Transverse colon (tissue), 4 donors: ENCODE measurements at regions of chr7 and their contacts with region 1.

Region 1: GRCh38 chr7:119037941-119038340 is 813.4 kb downstream of the ANKRD7 start:
- DNase-seq: no peak
- H3K4me3 ChIP-seq: no peak overlapping the region
- H3K27ac ChIP-seq: no peak overlapping the region
- H3K4me1 ChIP-seq: no peaks in the 10 kb centered on the region
- H3K27me3 ChIP-seq: no peaks in the 10 kb centered on the region
- CTCF ChIP-seq: no peak
- EP300 ChIP-seq: no peak
- POLR2A ChIP-seq: no peak

Region 2: DNA sequence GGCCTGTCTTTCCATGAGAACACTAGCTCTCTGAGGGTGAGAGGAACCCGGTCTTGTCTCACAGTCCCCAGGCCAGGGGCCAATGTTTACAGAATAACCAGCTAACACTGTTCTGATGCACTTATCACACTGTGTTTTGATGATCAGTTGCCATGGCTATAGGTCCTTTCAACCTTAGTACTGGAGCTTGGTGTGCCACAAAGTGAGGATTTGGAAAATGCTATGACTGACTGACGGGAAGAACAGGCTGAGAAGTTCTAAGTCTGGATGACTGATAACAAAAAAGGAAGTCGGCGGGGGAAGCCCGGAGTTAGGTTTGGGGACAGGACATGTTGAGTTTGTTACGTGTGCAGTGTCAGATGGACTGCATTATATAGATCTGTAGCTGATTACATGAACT is 1306.5 kb before region 1 on chr7:
- in situ Hi-C with region 1: no loop called
- intact Hi-C with region 1: loop called (anchors 5 kb)
- DNase-seq: no peak
- H3K4me3 ChIP-seq: no peak overlapping the region
- H3K27ac ChIP-seq: no peak overlapping the region
- H3K4me1 ChIP-seq: no peaks in the 10 kb centered on the region
- H3K27me3 ChIP-seq: no peaks in the 10 kb centered on the region
- CTCF ChIP-seq: no peak
- EP300 ChIP-seq: no peak
- POLR2A ChIP-seq: no peak

Region 3: DNA sequence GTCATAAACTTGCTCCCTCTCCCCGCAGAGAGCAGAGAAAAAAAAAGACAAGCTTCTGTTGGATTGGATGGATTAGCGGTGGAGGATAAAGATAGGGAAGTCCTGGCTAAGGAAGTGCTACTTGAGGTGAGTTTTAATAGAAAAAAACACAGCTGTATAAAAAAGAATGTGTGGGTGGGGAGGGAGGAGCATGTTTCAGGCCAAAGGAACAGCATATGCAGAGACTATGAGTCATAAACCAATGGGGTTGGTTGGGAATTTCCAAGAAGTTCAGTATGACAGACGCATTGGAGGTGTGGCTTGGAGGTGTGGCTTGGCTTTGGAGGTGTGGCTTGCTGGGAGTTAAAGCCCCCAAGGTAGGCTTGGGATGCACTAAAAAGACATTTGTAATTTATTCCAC is 957.0 kb before region 1 on chr7:
- in situ Hi-C with region 1: no loop called
- intact Hi-C with region 1: loop called (anchors 10 kb)
- DNase-seq: no peak
- H3K4me3 ChIP-seq: no peak overlapping the region
- H3K27ac ChIP-seq: no peak overlapping the region
- H3K4me1 ChIP-seq: no peaks in the 10 kb centered on the region
- H3K27me3 ChIP-seq: no peaks in the 10 kb centered on the region
- CTCF ChIP-seq: no peak
- EP300 ChIP-seq: no peak
- POLR2A ChIP-seq: no peak

Region 4: DNA sequence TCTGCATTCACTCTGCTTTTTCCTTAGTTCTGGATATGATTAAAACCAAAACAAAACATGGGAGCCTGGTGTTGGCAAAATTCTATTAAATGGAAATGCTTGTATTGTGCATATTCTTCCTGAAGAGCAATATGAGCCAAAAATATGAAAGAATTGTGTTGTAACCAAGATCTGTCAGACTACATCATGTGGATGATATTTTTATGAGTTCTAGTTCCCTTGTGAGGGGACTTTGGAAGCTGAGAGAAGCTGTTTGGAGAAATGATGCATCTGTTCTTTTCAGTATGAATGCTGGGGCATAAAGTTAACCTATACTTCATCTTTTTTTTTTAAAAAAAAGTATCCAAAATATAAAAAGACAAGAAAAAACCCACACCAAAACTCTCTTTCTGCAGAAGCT is 30.7 kb before region 1 on chr7:
- in situ Hi-C with region 1: no loop called
- intact Hi-C with region 1: no loop called
- DNase-seq: no peak
- H3K4me3 ChIP-seq: no peak overlapping the region
- H3K27ac ChIP-seq: no peak overlapping the region
- H3K4me1 ChIP-seq: no peaks in the 10 kb centered on the region
- H3K27me3 ChIP-seq: no peaks in the 10 kb centered on the region
- CTCF ChIP-seq: no peak
- EP300 ChIP-seq: no peak
- POLR2A ChIP-seq: no peak